ENCODE measurements at regions of chr5 and their contacts with region 1.

Region 1: DNA sequence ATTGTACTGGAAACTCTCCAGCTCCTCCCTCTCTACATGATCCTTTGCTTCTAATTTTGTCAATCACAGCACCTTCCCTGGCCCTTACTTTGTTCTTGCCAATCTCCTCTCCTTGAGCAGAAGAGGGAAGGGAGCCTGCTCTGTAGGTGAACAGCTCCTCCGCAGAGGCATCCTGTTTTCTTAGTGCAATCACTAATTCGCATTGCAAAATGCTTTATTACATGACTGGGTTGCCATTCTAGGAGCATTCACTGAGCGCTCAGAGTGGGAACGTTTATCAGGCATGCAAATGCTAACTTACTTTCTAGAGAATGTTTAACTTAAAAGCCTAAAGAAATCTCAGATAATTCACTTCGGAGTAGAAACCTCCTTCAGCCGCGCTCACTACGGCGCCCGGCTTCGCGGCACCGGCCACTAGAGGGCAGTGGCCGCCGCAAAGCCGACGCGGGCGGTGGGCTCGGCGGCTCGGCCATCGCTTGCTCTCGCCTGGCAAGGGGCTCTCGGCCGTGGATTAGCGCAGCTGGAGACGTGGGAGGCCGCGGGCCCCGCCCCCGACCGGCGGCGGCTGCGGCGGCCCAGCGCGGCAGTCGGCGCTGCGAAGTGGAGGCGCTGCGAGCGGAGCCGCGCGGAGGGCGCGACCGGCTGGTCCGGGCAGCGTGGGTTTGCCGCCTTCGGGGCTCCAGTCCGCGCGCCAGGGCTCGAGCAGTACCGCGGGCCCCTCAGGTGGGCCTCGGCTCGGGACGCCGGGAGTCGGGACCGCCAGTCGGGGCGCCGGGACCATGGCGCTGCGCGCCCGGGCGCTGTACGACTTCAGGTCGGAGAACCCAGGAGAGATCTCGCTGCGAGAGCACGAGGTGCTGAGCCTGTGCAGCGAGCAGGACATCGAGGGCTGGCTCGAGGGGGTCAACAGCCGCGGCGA is at the start of gene SNX18:
- DNase-seq: peak; percentile 95
- ATAC-seq: peak; percentile 77
- H3K4me3 Mint-ChIP-seq: peak within 1 kb of the TSS; percentile 71
- H3K27ac Mint-ChIP-seq: no peak within 1 kb of the TSS
- H3K4me1 Mint-ChIP-seq: peaks cover 40% of the 10 kb centered on the region
- H3K27me3 Mint-ChIP-seq: no peaks in the 10 kb centered on the region
- total RNA-seq, gene SNX18: 4.6 to 4.7 TPM

Region 2: DNA sequence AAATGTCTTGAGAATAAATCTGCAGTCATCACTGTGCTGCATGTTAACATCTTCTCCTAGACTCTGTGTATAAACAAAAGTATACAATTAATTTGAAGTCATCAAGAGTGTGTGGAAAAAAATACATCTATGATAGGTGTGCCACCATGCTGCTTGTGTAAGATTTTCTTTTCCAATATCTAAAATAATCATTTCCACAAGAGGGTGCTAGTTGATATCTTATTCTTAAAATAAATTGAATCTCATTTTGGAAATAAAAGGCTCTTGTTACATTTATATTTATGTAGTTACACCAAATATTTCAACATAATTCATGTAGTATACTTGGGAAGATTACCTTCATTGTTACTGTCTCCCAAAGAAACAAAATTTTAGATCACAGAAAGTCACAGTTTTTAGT is 1393.7 kb before region 1 on chr5:
- CTCF ChIA-PET with region 1: no interaction called
- POLR2A ChIA-PET with region 1: no interaction called
- intact Hi-C with region 1: no loop called
- DNase-seq: no peak
- ATAC-seq: no peak
- H3K4me3 Mint-ChIP-seq: no peak overlapping the region
- H3K27ac Mint-ChIP-seq: no peak overlapping the region
- H3K4me1 Mint-ChIP-seq: no peaks in the 10 kb centered on the region
- H3K27me3 Mint-ChIP-seq: no peaks in the 10 kb centered on the region

Region 3: GRCh38 chr5:53792338-53792737 is 725.1 kb before region 1 on chr5:
- CTCF ChIA-PET with region 1: no interaction called
- POLR2A ChIA-PET with region 1: no interaction called
- intact Hi-C with region 1: no loop called
- DNase-seq: no peak
- ATAC-seq: no peak
- H3K4me3 Mint-ChIP-seq: no peak overlapping the region
- H3K27ac Mint-ChIP-seq: no peak overlapping the region
- H3K4me1 Mint-ChIP-seq: no peaks in the 10 kb centered on the region
- H3K27me3 Mint-ChIP-seq: peaks cover 5% of the 10 kb centered on the region

Region 4: GRCh38 chr5:54390015-54390414 is 127.4 kb before region 1 on chr5:
- CTCF ChIA-PET with region 1: no interaction called
- POLR2A ChIA-PET with region 1: no interaction called
- intact Hi-C with region 1: no loop called
- DNase-seq: no peak
- ATAC-seq: no peak
- H3K4me3 Mint-ChIP-seq: no peak overlapping the region
- H3K27ac Mint-ChIP-seq: no peak overlapping the region
- H3K4me1 Mint-ChIP-seq: peaks cover 10% of the 10 kb centered on the region
- H3K27me3 Mint-ChIP-seq: peaks cover 2% of the 10 kb centered on the region

Region 5: DNA sequence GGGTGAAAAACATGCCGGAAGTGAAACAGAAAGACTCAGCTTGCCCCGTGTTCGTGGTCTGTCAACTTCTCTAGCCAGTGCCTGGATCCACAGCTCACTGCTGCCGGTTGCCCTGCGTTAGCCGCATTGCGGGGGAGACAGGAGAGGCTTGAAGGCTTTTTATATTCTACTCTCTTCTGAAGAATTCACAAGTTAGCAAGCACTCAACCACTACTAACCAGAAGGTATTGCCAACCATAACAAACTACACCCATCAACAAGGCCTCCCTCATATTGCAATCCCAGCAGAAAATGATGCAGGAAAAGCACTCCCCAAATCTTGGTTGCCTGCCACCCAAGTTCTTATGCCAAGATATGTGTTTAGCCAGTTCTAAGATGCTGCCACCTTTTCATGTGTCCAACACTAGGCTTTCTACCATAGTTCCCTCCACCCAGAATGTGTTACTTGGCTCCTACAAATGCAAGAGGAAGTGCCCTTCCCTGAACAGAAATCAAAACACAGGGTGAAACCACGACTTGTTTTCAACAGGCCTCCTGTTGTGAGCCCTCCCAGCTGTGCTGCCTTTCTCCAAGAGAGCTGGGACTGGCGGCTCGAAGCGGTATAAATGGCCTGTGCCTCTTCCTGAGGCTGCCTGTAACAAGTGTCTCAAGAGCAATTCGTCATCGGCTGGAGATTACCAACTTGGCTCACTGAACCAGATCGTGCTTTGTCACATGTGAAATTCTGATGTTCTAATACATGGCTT is 129.1 kb after region 1 on chr5:
- CTCF ChIA-PET with region 1: interaction called, 3 read pairs
- POLR2A ChIA-PET with region 1: no interaction called
- intact Hi-C with region 1: loop called (anchors 5 to 10 kb)
- DNase-seq: peak; percentile 77
- ATAC-seq: peak; percentile 87
- H3K4me3 Mint-ChIP-seq: peak overlapping the region; percentile 4
- H3K27ac Mint-ChIP-seq: peak overlapping the region; percentile 77
- H3K4me1 Mint-ChIP-seq: peaks cover 46% of the 10 kb centered on the region
- H3K27me3 Mint-ChIP-seq: no peaks in the 10 kb centered on the region

Region 6: GRCh38 chr5:54719384-54720283 is 202.2 kb after region 1 on chr5:
- CTCF ChIA-PET with region 1: interaction called, 4 read pairs
- POLR2A ChIA-PET with region 1: no interaction called
- intact Hi-C with region 1: loop called in 1 of 2 experiments (anchors 5 kb)
- DNase-seq: peak; percentile 52
- ATAC-seq: peak; percentile 64
- H3K4me3 Mint-ChIP-seq: no peak overlapping the region
- H3K27ac Mint-ChIP-seq: peak overlapping the region; percentile 4
- H3K4me1 Mint-ChIP-seq: peaks cover 30% of the 10 kb centered on the region
- H3K27me3 Mint-ChIP-seq: no peaks in the 10 kb centered on the region

Region 7: DNA sequence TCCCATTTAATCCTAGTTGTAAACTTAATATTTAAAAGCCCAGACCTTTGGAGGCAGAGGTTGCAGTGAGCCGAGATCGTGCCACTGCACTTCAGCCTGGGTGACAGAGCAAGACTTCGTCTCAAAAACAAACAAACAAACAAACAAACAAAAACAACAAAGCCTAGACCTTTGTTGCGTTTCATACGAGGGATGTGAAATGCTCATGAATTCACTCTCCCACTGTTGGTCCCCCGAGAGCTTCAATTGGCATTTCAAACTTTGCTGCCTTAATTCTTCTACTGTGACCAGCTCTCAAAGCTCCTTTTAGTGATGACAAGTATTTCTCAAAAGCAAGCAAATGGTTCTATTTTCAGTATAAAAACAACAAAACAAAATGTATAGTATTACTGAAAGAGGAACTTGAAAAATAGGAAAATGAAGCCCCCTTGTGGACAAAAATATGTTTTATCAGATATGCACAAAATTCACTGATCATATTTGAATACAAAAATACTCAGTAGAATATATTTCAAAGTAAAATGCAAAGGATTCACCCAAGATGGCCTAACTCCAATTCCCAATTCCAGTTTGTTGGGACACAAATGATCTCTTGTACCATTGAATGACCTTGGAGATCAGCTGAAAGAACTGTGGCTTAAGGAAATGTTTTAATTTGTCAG is 327.6 kb after region 1 on chr5:
- CTCF ChIA-PET with region 1: interaction called, 57 read pairs
- POLR2A ChIA-PET with region 1: no interaction called
- intact Hi-C with region 1: loop called (anchors 1 kb)
- DNase-seq: no peak
- ATAC-seq: no peak
- H3K4me3 Mint-ChIP-seq: no peak overlapping the region
- H3K27ac Mint-ChIP-seq: no peak overlapping the region
- H3K4me1 Mint-ChIP-seq: peaks cover 3% of the 10 kb centered on the region
- H3K27me3 Mint-ChIP-seq: peaks cover 5% of the 10 kb centered on the region

Region 8: GRCh38 chr5:54867310-54867944 is 350.0 kb after region 1 on chr5:
- CTCF ChIA-PET with region 1: interaction called, 34 read pairs
- POLR2A ChIA-PET with region 1: interaction called, 10 read pairs
- intact Hi-C with region 1: loop called (anchors 1 kb)
- DNase-seq: no peak
- ATAC-seq: no peak
- H3K4me3 Mint-ChIP-seq: no peak overlapping the region
- H3K27ac Mint-ChIP-seq: no peak overlapping the region
- H3K4me1 Mint-ChIP-seq: peaks cover 29% of the 10 kb centered on the region
- H3K27me3 Mint-ChIP-seq: peaks cover 34% of the 10 kb centered on the region

Region 9: DNA sequence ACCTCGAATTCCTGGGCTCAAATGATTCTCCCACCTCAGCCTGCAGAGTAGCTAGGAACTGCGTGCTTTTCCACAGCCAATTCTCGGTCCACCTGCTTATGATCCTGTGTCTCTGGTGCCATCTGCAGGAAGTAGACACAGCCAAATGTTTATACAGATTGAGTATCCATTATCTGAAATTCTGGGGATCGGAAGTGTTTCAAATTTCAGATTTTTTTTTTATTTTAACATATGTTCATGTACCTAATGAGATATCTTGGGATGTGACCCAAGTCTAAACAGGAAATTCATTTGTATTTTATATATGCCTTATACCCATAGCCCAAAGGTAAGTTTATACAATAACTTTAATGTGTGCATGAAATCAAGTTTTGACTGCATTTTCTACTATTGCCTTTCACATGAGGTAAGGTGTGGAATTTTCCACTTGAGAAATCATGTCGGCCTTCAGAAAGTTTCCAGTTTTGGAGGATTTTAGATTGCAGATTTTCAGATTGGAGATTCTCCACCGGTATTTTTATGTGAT is 378.4 kb after region 1 on chr5:
- CTCF ChIA-PET with region 1: interaction called, 8 read pairs
- POLR2A ChIA-PET with region 1: no interaction called
- intact Hi-C with region 1: loop called (anchors 1 kb)
- DNase-seq: peak; percentile 23
- ATAC-seq: peak; percentile 33
- H3K4me3 Mint-ChIP-seq: no peak overlapping the region
- H3K27ac Mint-ChIP-seq: peak overlapping the region; percentile 21
- H3K4me1 Mint-ChIP-seq: peaks cover 5% of the 10 kb centered on the region
- H3K27me3 Mint-ChIP-seq: peaks cover 68% of the 10 kb centered on the region

Region 10: GRCh38 chr5:55146543-55147151 is 629.2 kb after region 1 on chr5:
- CTCF ChIA-PET with region 1: interaction called, 3 read pairs
- POLR2A ChIA-PET with region 1: no interaction called
- intact Hi-C with region 1: loop called (anchors 1 to 2 kb)
- DNase-seq: peak; percentile 88
- ATAC-seq: peak; percentile 95
- H3K4me3 Mint-ChIP-seq: no peak overlapping the region
- H3K27ac Mint-ChIP-seq: no peak overlapping the region
- H3K4me1 Mint-ChIP-seq: peaks cover 15% of the 10 kb centered on the region
- H3K27me3 Mint-ChIP-seq: peaks cover 15% of the 10 kb centered on the region